Right ventricle myocardium superior (tissue), 1 donor: ENCODE measurements at regions of chr22 and their contacts with region 1.

Region 1: GRCh38 chr22:26086359-26086758 is 82.9 kb upstream of the SEZ6L start:
- DNase-seq: no peak
- ATAC-seq: no peak

Region 2: DNA sequence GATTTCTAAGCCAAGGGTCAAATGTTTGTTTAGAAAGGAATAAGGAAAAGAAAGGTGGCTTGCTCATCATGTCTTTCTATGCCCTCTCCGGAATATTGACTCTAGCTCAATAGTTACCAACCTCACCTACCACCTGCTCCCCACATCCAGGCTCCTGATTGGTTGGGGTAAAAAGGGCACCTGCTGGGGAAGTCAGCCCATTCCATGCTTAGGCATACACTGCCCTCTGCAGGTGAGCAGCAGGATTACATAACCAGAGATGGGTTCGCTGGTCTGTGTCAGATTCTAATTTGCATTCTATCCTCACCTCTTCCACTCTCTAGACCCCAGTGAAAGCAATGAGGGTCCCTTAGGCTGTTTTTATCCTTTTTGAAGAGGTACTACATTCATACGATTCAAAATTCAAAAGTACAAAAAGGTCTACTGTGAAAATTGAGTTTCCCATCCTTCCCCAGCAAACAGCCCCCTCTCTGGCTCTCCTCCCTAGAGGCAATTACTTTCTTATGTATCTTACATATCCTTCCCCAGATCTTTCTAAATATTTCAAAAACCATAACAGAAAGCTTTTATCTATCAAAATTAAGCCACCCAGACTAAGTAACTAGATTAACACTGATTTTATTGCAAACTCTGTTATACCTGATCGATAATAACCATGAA is 244.7 kb after region 1 on chr22:
- intact Hi-C with region 1: loop called (anchors 5 kb)
- DNase-seq: no peak
- ATAC-seq: peak; percentile 49